Transverse colon (tissue), 4 donors: ENCODE measurements at regions of chr5 and their contacts with region 1.

Region 1: GRCh38 chr5:170115925-170116324 is 10.2 kb downstream of the FOXI1 start:
- DNase-seq: no peak
- H3K4me3 ChIP-seq: no peak overlapping the region
- H3K27ac ChIP-seq: no peak overlapping the region
- H3K4me1 ChIP-seq: no peaks in the 10 kb centered on the region
- H3K27me3 ChIP-seq: no peaks in the 10 kb centered on the region
- CTCF ChIP-seq: no peak
- EP300 ChIP-seq: no peak
- POLR2A ChIP-seq: no peak

Region 2: GRCh38 chr5:170132976-170133448 is 17.1 kb after region 1 on chr5:
- in situ Hi-C with region 1: no loop called
- intact Hi-C with region 1: loop called (anchors 1 kb)
- DNase-seq: no peak
- H3K4me3 ChIP-seq: no peak overlapping the region
- H3K27ac ChIP-seq: no peak overlapping the region
- H3K4me1 ChIP-seq: no peaks in the 10 kb centered on the region
- H3K27me3 ChIP-seq: no peaks in the 10 kb centered on the region
- CTCF ChIP-seq: no peak
- EP300 ChIP-seq: no peak
- POLR2A ChIP-seq: no peak

Region 3: GRCh38 chr5:170306381-170306831 is 190.5 kb after region 1 on chr5:
- in situ Hi-C with region 1: no loop called
- intact Hi-C with region 1: no loop called
- DNase-seq: no peak
- H3K4me3 ChIP-seq: no peak overlapping the region
- H3K27ac ChIP-seq: peak overlapping the region in 3 of 4 donors; percentile 32 to 56 (median 55)
- H3K4me1 ChIP-seq: peaks cover 0 to 38% (median 5%) of the 10 kb centered on the region in 4 donors
- H3K27me3 ChIP-seq: no peaks in the 10 kb centered on the region
- CTCF ChIP-seq: no peak
- EP300 ChIP-seq: no peak
- POLR2A ChIP-seq: no peak